ENCODE measurements at regions of chr22 and their contacts with region 1.

Region 1: GRCh38 chr22:37566903-37567820 is 6.9 kb downstream of the CDC42EP1 start:
- DNase-seq: peak; percentile 87
- H3K4me3 Mint-ChIP-seq: peak overlapping the region; percentile 51
- H3K27ac Mint-ChIP-seq: peak overlapping the region; percentile 73
- H3K4me1 Mint-ChIP-seq: peaks cover 34% of the 10 kb centered on the region
- H3K27me3 Mint-ChIP-seq: peaks cover 22% of the 10 kb centered on the region

Region 2: DNA sequence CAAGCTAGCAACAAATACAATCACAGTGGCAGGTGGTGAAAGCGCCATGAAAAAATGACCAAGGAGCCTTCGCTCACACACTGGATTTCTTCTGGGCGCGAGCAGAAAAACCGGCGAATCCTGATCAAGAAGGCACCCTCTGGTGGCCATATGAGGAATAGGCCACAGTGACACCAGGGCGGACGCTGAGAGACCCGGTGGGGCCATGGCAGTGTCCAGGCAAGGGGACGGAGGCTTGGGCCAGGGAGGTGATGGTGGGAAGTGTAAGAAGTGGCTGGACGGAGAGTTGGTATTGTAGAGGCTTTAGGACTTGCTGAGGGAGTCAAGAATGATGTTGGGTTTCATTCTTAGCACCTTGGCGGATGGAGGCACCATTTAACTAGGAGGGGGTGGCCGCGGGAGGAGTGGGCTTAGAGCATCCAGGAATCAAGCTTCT is 306.2 kb before region 1 on chr22:
- intact Hi-C with region 1: loop called (anchors 1 kb)
- DNase-seq: peak; percentile 55
- H3K4me3 Mint-ChIP-seq: no peak overlapping the region
- H3K27ac Mint-ChIP-seq: no peak overlapping the region
- H3K4me1 Mint-ChIP-seq: peaks cover 26% of the 10 kb centered on the region
- H3K27me3 Mint-ChIP-seq: peaks cover 8% of the 10 kb centered on the region

Region 3: GRCh38 chr22:37316875-37317371 is 250.2 kb before region 1 on chr22:
- intact Hi-C with region 1: loop called (anchors 1 kb)
- DNase-seq: peak; percentile 51
- H3K4me3 Mint-ChIP-seq: no peak overlapping the region
- H3K27ac Mint-ChIP-seq: no peak overlapping the region
- H3K4me1 Mint-ChIP-seq: peaks cover 45% of the 10 kb centered on the region
- H3K27me3 Mint-ChIP-seq: peaks cover 17% of the 10 kb centered on the region

Region 4: GRCh38 chr22:37538590-37539357 is 28.4 kb before region 1 on chr22:
- intact Hi-C with region 1: loop called (anchors 1 kb)
- DNase-seq: peak; percentile 83
- H3K4me3 Mint-ChIP-seq: peak overlapping the region; percentile 41
- H3K27ac Mint-ChIP-seq: peak overlapping the region; percentile 50
- H3K4me1 Mint-ChIP-seq: peaks cover 40% of the 10 kb centered on the region
- H3K27me3 Mint-ChIP-seq: peaks cover 13% of the 10 kb centered on the region

Region 5: DNA sequence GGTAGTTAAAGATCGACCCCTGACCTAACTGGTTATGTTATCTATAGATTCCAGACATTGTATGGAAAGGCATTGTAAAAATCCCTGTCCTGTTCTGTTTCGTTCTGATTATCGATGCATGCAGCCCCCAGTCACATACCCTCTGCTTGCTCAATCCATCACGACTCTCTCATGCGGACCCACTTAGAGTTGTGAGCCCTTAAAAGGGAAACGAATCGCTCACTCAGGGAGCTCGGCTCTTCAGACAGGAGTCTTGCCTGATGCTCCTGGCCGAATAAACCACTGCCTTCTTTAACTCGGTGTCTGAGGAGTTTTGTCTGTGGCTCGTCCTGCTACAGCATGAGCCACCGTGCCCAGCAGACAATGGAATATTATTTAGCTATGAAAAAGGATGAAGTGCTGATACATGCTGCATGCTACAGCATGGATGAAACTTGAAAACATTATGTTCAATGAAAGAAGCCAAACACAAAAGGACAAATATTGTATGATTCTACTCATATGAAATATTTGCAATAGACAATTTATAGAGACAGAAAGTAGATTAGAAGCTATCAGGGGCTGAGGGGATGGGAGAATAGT is 24.8 kb after region 1 on chr22:
- intact Hi-C with region 1: loop called (anchors 2 kb)
- DNase-seq: no peak
- H3K4me3 Mint-ChIP-seq: peak overlapping the region; percentile 79
- H3K27ac Mint-ChIP-seq: no peak overlapping the region
- H3K4me1 Mint-ChIP-seq: peaks cover 13% of the 10 kb centered on the region
- H3K27me3 Mint-ChIP-seq: peaks cover 11% of the 10 kb centered on the region

Region 6: DNA sequence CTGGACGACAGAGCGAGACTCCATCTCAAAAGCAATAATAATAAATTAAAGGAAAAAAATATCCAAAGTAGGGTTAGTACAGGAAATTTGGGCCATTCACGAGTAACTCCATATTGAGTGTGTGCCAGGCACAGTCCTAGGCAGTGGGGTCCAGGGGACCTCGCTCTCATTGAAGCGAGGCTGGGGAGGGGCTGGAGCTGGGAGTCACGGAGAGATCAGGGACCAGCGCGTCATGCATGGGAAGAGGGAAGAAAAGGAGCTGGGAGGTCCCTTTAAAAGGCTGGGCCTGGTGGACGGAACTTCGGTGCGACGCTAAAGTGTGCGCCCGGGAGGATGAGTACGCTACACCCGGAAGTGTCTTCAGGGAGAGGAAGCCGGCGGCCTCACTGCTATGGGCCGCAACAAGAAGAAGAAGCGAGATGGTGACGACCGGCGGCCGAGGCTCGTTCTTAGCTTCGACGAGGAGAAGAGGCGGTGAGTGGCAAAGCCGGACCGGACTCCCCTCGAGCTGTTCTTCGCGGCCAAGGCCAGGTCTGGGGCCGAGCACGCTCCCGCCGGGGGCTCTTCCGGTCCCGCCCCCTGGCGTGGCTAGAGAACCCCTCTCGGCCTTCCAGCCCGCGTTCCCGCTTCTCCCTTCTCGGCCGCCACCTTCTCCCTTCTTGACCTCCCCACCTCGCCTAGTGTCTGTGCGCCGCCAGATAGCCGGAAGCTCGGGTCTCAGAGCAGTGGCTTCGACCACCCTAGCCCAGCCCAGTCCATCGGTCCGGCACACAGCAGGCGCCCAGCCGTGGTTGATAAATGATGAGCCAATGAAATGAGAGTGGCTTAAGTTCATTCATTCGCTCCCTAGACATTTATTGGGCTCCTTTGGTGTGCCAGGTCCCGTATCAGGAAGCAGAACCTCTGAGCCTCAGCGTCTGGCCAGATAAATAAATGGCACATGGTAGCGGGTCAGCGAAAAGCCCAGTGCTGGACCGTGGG is 119.1 kb after region 1 on chr22 and contains the start of gene NOL12:
- intact Hi-C with region 1: no loop called
- DNase-seq: peak; percentile 74
- H3K4me3 Mint-ChIP-seq: peak within 1 kb of the TSS; percentile 96
- H3K27ac Mint-ChIP-seq: peak within 1 kb of the TSS; percentile 97
- H3K4me1 Mint-ChIP-seq: peaks cover 24% of the 10 kb centered on the region
- H3K27me3 Mint-ChIP-seq: no peaks in the 10 kb centered on the region
- total RNA-seq, gene NOL12: 67.8 and 70.0 TPM in 2 replicates

Region 7: DNA sequence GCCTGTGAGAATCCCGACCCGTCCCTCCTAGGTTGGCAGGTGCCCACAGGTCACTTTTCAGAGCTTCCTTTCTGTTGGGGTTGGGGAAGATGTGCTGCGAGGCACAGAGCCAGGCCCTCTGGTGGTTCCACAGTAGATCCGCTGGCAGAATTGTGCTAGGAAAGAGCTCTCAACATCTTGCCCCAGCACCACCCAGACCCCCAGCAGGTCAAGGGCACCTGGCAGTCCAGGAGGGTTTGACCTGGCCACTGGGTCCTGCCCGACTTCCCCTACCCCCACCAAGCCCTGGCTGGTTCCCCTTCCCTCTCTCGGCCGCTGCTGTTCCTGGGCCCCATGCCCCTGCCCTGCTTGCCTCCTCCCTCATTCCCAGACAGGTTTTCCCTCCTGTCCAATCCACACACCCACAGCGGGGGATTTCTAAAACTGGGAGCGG is 214.3 kb after region 1 on chr22:
- intact Hi-C with region 1: no loop called
- DNase-seq: no peak
- H3K4me3 Mint-ChIP-seq: no peak overlapping the region
- H3K27ac Mint-ChIP-seq: no peak overlapping the region
- H3K4me1 Mint-ChIP-seq: no peaks in the 10 kb centered on the region
- H3K27me3 Mint-ChIP-seq: peaks cover 2% of the 10 kb centered on the region